ENCODE measurements at regions of chr4 and their contacts with region 1.

Region 1: GRCh38 chr4:27010334-27010940 is 149.8 kb downstream of the STIM2 start:
- DNase-seq: peak; percentile 42 to 66
- ATAC-seq: peak; percentile 71 to 90 (median 77)
- H3K4me3 ChIP-seq: no peak overlapping the region
- H3K27ac ChIP-seq: no peak overlapping the region
- H3K4me1 ChIP-seq: peaks cover 3% of the 10 kb centered on the region
- H3K27me3 ChIP-seq: no peaks in the 10 kb centered on the region
- CTCF ChIP-seq: peak; percentile 94

Region 2: DNA sequence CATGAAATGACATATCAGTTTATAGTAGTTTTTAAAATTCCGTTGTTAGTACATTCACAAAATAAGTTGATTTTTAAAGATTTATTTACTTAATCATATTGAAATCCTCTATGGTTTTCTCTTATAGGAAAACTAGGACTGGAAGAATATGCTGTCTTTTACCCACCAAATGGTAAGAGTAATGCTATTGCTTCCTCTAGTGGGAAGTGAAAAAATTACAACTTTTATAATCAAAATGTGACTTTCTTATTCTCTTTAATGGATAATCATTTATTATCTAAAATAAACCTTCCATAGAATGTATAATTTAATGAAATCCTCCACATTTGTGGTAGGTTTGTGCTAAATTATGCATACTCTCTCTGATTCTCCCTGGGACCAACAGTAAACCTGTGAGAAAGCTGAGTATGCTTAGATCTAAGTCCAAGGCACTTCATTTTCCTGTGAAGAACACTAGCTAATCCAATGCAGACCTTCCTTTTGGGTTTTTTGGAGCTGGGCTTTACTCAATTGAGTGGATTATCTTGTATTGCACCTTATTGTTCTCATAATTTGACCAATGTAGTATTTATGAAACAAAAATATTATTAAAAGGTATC is 290.4 kb before region 1 on chr4:
- intact Hi-C with region 1: loop called in 1 of 2 experiments (anchors 5 kb)
- DNase-seq: no peak
- ATAC-seq: no peak
- H3K4me3 ChIP-seq: no peak overlapping the region
- H3K27ac ChIP-seq: no peak overlapping the region
- H3K4me1 ChIP-seq: peaks cover 10% of the 10 kb centered on the region
- H3K27me3 ChIP-seq: no peaks in the 10 kb centered on the region
- CTCF ChIP-seq: peak; percentile 65

Region 3: DNA sequence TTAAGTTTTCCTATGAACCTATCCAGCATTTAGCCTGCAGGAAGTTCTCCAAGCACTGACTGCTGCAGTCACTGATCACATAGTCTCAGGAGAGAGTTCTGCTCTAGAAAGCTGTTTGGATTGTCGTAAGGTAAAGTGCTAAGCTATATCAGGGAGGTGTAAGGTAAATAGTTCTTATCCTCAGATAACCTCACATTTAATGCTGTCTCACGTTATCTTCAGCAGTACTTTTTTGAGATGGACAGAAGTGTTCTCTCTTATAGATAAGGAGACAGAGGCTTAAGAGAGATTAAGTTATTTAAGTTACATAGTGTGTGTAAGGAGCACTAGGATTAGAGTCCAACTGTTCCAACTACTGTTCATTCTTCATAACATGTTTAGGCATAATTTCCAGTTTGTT is 71.9 kb before region 1 on chr4:
- intact Hi-C with region 1: no loop called
- DNase-seq: no peak
- ATAC-seq: no peak
- H3K4me3 ChIP-seq: no peak overlapping the region
- H3K27ac ChIP-seq: no peak overlapping the region
- H3K4me1 ChIP-seq: no peaks in the 10 kb centered on the region
- H3K27me3 ChIP-seq: no peaks in the 10 kb centered on the region
- CTCF ChIP-seq: no peak